ENCODE measurements at regions of chr10 and their contacts with region 1.

Region 1: DNA sequence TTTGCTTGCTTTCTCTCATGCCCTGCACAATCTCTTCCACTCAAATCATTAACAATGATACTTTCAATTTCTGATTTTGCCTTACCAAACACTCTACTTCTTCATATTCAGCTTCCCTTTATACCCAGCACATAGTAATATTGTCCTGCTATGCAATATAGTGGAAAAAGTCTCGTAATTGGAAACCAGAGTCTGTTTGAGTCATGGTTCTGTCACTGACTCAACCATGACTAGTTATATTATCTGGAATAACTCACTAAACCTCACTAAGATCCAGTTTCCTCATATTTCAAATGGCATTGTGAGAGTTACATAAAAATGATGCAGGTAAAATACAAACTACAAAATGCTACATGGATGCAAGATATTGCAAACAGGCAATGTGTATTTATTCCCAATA is 98.5 kb upstream of the LRRTM3 start:
- DNase-seq: no peak
- H3K4me3 Mint-ChIP-seq: no peak overlapping the region
- H3K27ac Mint-ChIP-seq: peak overlapping the region; percentile 25
- H3K4me1 Mint-ChIP-seq: peaks cover 49% of the 10 kb centered on the region
- H3K27me3 Mint-ChIP-seq: no peaks in the 10 kb centered on the region
- CTCF ChIP-seq: no peak

Region 2: DNA sequence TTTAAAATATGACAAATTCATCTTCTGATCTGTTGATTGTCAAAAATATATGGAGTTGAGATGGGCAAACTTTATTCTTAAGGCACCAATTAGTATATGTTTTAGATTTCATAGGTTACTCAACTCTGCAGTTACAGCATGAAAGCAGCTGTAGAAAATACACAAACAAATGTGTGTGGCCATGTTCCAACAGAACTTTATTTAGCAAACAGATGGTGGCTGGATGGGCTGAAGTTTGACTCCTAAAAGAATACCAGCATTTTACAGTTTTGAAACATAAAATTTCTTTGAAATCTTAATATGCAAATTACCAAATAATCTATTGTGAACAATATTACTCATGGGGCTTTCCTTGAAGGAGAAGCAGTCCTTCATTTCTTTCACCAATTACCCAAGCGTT is 1107.6 kb before region 1 on chr10:
- CTCF ChIA-PET with region 1: no interaction called
- intact Hi-C with region 1: loop called (anchors 10 kb)
- DNase-seq: no peak
- H3K4me3 Mint-ChIP-seq: no peak overlapping the region
- H3K27ac Mint-ChIP-seq: no peak overlapping the region
- H3K4me1 Mint-ChIP-seq: peaks cover 19% of the 10 kb centered on the region
- H3K27me3 Mint-ChIP-seq: no peaks in the 10 kb centered on the region
- CTCF ChIP-seq: no peak

Region 3: DNA sequence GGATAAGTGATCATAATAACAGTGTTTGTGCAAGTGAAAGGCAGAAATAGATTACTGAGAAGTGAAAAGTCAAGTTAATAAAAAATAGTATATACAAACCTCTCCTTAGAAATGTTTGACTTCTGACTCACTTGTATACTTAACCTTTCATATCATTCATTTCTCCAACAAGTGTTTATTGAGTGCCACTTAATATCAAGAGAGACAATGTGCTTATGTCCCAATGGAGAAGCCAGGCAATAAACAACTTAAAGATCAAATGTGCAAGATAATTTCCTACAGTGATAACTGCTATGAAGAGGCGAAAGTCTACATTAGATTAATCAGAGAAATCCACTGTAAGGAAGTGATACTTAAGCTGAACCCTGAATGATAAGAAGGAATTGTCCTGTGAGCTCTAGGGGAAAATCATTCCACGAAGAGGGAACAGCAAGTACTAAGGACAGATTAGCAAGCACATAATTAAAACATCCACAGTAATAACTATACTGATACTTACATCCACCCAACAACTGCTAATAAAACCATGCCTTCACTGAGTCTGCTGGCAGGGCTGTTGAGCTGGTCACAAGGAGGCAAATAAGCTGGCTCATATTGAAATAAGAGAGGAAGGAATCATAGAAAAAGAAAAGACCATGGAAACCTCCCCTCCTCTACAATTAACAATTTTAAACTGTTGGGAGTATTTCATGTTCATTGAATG is 665.1 kb after region 1 on chr10:
- CTCF ChIA-PET with region 1: no interaction called
- intact Hi-C with region 1: loop called (anchors 10 kb)
- DNase-seq: no peak
- H3K4me3 Mint-ChIP-seq: peak overlapping the region; percentile 24
- H3K27ac Mint-ChIP-seq: peak overlapping the region; percentile 28
- H3K4me1 Mint-ChIP-seq: peaks cover 32% of the 10 kb centered on the region
- H3K27me3 Mint-ChIP-seq: peaks cover 46% of the 10 kb centered on the region
- CTCF ChIP-seq: no peak